Posterior vena cava (tissue), 2 donors: ENCODE measurements at regions of chr16 and their contacts with region 1.

Region 1: DNA sequence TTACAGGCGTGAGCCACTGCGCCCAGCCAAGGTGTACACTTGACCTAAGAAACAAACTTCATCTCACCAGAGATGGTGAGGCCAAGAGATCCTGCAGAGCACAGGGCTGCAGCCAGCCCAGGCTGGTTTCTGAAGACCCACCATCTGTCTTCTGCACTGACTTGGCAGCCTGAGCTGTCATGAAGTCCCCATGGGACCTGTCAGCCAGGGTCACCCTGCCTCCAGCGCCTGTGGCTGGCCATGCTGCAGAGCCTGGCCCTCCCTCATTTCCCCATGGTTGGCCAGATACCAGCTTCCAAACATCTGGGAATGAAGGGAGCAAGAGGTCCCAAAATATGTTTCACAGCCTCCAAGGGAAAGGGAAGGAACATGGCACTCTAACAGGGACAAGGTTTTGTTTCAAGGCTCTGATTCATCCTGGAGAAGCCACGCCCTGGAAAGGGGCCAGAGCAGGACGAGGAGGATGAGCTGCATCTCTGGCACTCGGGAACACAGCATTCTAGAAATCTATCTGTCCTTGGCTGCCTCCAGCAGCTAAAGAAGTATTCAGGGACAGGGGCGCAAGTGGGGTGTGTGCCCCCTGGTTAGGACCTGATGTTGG is 45.3 kb downstream of the DDX19A start:
- DNase-seq: peak; percentile 91

Region 2: GRCh38 chr16:70370924-70371323 is 21.1 kb before region 1 on chr16:
- intact Hi-C with region 1: loop called in 1 of 2 experiments (anchors 1 kb)
- DNase-seq: no peak

Region 3: GRCh38 chr16:70416748-70417616 is 25.0 kb after region 1 on chr16:
- intact Hi-C with region 1: no loop called
- DNase-seq: no peak